ENCODE measurements at regions of chr4 and their contacts with region 1.

Region 1: DNA sequence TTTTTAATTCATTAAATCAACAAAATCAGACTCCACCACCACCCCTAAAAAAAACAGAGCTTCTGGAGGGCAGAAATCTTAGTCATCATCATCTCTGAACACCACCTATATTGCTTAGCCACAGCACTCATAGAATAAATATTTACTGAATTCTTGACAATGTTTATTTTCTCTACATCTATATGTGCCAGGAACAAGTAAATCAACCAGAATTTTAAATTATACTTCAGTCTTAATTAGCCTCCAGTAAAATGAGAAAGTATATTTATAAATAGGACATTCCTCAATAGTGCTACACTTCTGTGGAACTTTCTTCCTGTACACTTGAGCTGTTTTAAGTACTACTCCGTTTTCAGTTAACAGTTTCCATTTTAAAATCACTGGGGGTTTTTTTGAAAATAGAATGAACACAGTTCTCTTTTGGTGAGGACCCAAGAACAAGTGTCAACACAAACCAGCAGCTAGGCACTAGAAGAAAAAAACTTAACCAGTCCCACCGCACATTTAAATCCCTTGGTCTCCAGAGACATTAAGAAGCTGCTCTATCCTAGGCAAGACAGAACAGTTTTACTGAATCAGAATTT is 25.5 kb downstream of the SMIM14 start:
- DNase-seq: no peak
- H3K4me3 Mint-ChIP-seq: no peak overlapping the region
- H3K27ac Mint-ChIP-seq: no peak overlapping the region
- H3K4me1 Mint-ChIP-seq: peaks cover 6% of the 10 kb centered on the region
- H3K27me3 Mint-ChIP-seq: no peaks in the 10 kb centered on the region

Region 2: GRCh38 chr4:39565878-39566600 is 47.1 kb before region 1 on chr4:
- CTCF ChIA-PET with region 1: no interaction called
- intact Hi-C with region 1: loop called (anchors 5 kb)
- DNase-seq: no peak
- H3K4me3 Mint-ChIP-seq: no peak overlapping the region
- H3K27ac Mint-ChIP-seq: no peak overlapping the region
- H3K4me1 Mint-ChIP-seq: peaks cover 2% of the 10 kb centered on the region
- H3K27me3 Mint-ChIP-seq: no peaks in the 10 kb centered on the region